B cell (primary cell): ENCODE measurements at regions of chr1 and their contacts with region 1.

Region 1: DNA sequence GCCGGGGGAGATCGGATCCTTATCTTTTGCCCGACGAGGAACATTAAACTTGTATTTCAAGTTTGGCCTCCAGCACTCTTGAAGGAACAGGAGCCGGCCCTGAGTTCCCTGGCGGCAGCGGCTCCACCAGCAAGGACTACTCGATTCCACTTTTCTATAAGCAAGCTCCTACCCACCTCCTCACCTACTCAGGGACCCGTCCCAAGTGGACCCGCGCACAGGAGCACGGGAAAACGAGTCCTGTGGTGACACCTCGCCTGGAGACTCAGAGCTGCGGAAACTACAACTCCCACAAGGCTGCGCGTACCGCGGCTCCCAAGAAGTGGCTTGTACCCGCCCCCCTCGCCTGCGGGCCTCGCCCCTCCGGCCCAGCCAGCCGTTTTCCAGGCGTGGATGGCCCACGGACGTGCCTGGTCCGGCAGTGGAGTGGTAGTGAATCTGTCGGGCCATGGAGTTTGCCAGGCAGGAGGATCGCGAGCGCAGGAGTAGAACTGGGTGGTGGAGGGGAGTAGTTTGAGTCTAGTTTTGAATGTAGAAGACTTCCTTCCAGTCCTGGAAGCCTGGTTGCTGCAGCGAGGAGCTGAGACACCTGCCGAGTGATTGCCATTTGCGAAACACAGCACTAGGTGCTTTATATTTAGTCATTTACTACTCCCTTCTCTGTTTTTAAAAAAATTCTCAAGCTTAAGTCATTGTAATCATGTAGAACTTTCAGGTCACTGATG is at the start of gene ACP6:
- DNase-seq: peak; percentile 86
- ATAC-seq: peak; percentile 98
- H3K4me3 ChIP-seq: peak within 1 kb of the TSS; percentile 80 to 96 (median 85)
- H3K4me3 Mint-ChIP-seq: peak within 1 kb of the TSS; percentile 97
- H3K27ac ChIP-seq: peak within 1 kb of the TSS in 1 of 2 donors; percentile 33
- H3K27ac Mint-ChIP-seq: peak within 1 kb of the TSS; percentile 79
- H3K4me1 ChIP-seq: peaks cover 6 to 10% of the 10 kb centered on the region in 2 donors
- H3K4me1 Mint-ChIP-seq: peaks cover 12% of the 10 kb centered on the region
- H3K27me3 ChIP-seq: peaks cover 0 to 3% (median 0%) of the 10 kb centered on the region in 4 experiments
- H3K27me3 Mint-ChIP-seq: peaks cover 23% of the 10 kb centered on the region
- CTCF ChIP-seq: no peak
- total RNA-seq, gene ACP6: 14.2 and 15.7 TPM in 2 replicates

Region 2: GRCh38 chr1:147177611-147178380 is 492.7 kb before region 1 on chr1:
- CTCF ChIA-PET with region 1: no interaction called
- POLR2A ChIA-PET with region 1: no interaction called
- intact Hi-C with region 1: loop called (anchors 5 kb)
- DNase-seq: peak; percentile 13
- ATAC-seq: no peak
- H3K4me3 ChIP-seq: peak overlapping the region in 2 of 5 experiments; percentile 22 to 27
- H3K4me3 Mint-ChIP-seq: peak overlapping the region; percentile 63
- H3K27ac ChIP-seq: no peak overlapping the region
- H3K27ac Mint-ChIP-seq: no peak overlapping the region
- H3K4me1 ChIP-seq: peaks cover 11 to 12% of the 10 kb centered on the region in 2 donors
- H3K4me1 Mint-ChIP-seq: peaks cover 21% of the 10 kb centered on the region
- H3K27me3 ChIP-seq: peaks cover 0 to 3% (median 0%) of the 10 kb centered on the region in 4 experiments
- H3K27me3 Mint-ChIP-seq: no peaks in the 10 kb centered on the region
- CTCF ChIP-seq: no peak

Region 3: DNA sequence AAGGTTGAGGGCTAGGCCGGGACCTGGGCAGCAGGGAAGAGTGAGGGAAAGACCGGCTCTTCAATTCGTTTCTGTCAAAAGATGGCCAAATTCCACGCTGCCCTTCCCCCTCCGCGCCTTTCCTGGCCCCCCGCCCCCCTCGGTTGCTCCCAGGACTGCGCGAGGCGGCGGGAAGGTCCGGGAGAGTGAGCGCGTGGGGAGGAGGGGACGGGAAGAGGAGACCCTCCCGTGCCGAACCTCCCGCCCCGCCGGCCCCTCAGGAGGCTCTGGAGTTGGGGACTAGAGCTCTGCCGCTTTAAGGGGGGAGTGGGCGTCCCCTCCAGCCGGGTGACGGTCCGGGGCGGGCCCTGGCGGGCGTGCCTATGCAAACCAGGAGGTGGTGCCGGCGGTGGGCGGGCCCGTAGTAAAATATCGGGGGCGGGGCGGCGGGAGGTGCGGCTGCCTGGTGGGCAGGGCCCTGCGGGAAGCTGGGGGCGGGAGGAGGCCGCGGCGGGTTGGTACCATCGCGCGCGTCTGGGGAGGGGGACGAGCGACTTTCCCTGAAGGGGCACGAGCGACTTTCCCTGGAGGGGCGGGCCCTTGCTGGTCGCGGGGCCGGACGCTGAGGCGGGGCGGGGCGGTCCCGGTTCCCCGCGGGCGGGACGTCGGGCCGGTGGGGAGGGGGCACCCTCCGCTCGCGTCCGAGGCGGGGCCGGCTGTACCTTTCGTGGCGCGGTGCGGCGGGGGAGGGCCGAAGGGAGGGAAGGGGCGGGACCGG is 70.9 kb before region 1 on chr1:
- CTCF ChIA-PET with region 1: interaction called, 3 read pairs
- POLR2A ChIA-PET with region 1: interaction called, 3 read pairs
- intact Hi-C with region 1: loop called (anchors 1 kb)
- DNase-seq: peak; percentile 96
- ATAC-seq: peak; percentile 84
- H3K4me3 ChIP-seq: peak overlapping the region; percentile 47 to 83 (median 74)
- H3K4me3 Mint-ChIP-seq: peak overlapping the region; percentile 94
- H3K27ac ChIP-seq: peak overlapping the region; percentile 28 to 62
- H3K27ac Mint-ChIP-seq: peak overlapping the region; percentile 71
- H3K4me1 ChIP-seq: peaks cover 15 to 18% of the 10 kb centered on the region in 2 donors
- H3K4me1 Mint-ChIP-seq: peaks cover 15% of the 10 kb centered on the region
- H3K27me3 ChIP-seq: peaks cover 0 to 13% (median 8%) of the 10 kb centered on the region in 4 experiments
- H3K27me3 Mint-ChIP-seq: no peaks in the 10 kb centered on the region
- CTCF ChIP-seq: no peak

Region 4: DNA sequence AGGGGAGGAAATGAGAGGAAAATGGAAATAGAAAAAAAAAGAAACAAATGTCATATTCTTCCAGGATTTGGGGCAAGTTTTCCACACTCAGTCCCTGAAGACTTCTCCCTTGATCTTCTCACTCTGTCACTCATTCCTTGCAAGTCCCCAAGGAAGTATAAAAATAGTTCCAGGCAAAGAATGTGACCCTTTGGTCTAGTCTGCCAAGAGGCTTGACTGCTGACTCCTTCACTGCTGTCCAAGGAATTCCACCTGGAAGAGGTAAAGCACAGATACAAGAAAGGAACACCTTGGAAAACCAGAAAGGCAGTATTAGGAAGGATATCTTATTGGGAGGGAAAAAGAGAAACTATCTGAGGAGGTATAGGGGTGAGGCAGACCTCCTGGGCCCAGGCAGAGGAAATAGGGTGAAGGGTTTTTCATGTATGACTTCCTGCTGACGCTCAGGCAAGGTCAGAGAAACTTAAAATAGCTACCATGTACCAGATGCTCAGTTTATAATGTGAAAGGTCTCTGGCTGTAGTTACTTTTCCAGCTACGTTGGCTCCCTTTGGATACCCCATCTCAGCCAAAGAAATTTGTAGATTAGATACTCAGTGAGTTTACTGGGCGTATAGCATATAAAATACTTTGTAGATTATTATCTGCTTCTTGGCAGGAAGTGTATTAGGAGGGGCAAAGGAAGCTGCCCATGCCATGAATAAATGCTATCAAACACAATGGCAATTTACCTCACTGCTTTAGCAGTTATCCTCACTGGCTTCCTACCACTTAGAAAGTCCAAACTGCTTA is 92.0 kb after region 1 on chr1:
- CTCF ChIA-PET with region 1: no interaction called
- POLR2A ChIA-PET with region 1: no interaction called
- intact Hi-C with region 1: no loop called
- DNase-seq: peak; percentile 43
- ATAC-seq: peak; percentile 21
- H3K4me3 ChIP-seq: peak overlapping the region in 1 of 5 experiments; percentile 28
- H3K4me3 Mint-ChIP-seq: peak overlapping the region; percentile 41
- H3K27ac ChIP-seq: peak overlapping the region; percentile 64 to 71
- H3K27ac Mint-ChIP-seq: peak overlapping the region; percentile 57
- H3K4me1 ChIP-seq: peaks cover 29 to 30% of the 10 kb centered on the region in 2 donors
- H3K4me1 Mint-ChIP-seq: peaks cover 26% of the 10 kb centered on the region
- H3K27me3 ChIP-seq: no peaks in the 10 kb centered on the region
- H3K27me3 Mint-ChIP-seq: no peaks in the 10 kb centered on the region
- CTCF ChIP-seq: no peak